ENCODE measurements at regions of chr6 and their contacts with region 1.

Region 1: DNA sequence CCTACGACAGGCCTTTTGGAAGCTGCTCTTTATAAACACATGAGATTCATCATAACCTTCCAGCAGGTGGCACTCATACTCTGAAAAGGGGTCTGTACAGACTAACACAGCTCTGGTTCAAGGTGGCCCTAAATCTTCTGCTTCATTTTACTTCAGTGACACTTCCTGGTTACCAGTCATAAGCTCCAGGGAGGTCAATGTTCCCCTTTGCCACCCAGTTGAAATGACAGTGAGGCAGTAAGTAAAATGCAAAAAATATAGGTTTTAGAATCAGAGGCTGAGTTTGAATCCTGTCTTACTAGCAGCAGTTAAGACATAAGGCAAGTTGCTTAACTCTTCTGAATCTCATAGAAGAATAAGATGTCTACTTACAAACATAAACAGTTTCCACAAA is 132.8 kb downstream of the CDK19 start:
- DNase-seq: peak; percentile 56
- H3K4me3 ChIP-seq: peak overlapping the region in 1 of 2 experiments; percentile 34; a peak in 2 of 4 replicates
- H3K27ac ChIP-seq: peak overlapping the region in 1 of 2 experiments; percentile 92; a peak in 2 of 4 replicates
- H3K4me1 ChIP-seq: peaks cover 5% of the 10 kb centered on the region in 2 experiments; a peak in 3 of 4 replicates
- H3K27me3 ChIP-seq: no peaks in the 10 kb centered on the region
- CTCF ChIP-seq: peak; percentile 84
- EP300 ChIP-seq: no peak
- RAD21 ChIP-seq: peak; percentile 88

Region 2: DNA sequence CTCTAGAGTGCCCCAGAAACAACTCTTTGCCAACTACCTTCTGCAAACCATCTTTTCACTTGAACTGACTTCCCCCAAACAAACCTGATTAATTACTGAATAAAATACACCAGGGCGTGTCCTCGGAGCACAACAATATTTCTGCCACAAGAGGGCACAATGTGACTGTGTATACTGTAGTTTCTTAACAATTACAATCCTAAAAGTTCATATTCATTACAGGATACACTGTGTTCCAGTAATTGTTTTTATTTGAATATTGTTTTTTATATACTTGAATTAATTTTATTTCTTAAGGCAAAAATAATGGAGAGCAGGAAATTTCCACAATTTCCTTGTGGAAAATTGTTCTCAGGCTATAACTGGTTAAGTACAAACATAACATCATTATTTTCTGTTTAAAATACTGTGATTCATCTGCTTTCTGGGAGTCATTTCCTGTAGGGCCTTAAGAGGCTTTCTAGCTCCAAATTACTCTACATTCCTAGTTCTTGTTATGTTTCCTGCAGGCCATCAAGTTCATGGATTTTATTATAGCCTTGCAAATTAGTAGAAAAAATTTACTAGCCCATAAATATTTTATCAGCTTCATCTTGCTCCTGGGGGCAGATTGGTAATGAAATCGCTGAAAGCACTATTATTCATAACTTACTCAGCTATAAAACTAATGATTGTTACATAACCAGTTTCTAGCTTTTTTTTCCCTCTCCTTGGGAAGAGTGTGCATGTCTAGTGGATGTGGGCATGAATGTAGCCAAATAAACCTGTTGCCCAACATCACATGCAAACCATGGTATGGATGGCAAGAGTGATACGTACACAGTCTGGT is 154.1 kb before region 1 on chr6:
- CTCF ChIA-PET with region 1: interaction called, 11 read pairs
- POLR2A ChIA-PET with region 1: no interaction called
- DNase-seq: peak; percentile 59
- H3K4me3 ChIP-seq: peak overlapping the region in 1 of 2 experiments; percentile 42; a peak in 1 of 4 replicates
- H3K27ac ChIP-seq: peak overlapping the region; percentile 47 to 91; a peak in 3 of 4 replicates
- H3K4me1 ChIP-seq: peaks cover 0 to 18% of the 10 kb centered on the region in 2 experiments; a peak in 2 of 4 replicates
- H3K27me3 ChIP-seq: no peaks in the 10 kb centered on the region
- CTCF ChIP-seq: peak; percentile 93
- EP300 ChIP-seq: peak; percentile 8 to 90; a peak in 3 of 4 replicates
- RAD21 ChIP-seq: peak; percentile 93

Region 3: GRCh38 chr6:110699780-110700179 is 17.3 kb after region 1 on chr6:
- CTCF ChIA-PET with region 1: interaction called, 10 read pairs
- POLR2A ChIA-PET with region 1: no interaction called
- DNase-seq: no peak
- H3K4me3 ChIP-seq: no peak overlapping the region
- H3K27ac ChIP-seq: peak overlapping the region in 1 of 2 experiments; percentile 86; a peak in 2 of 4 replicates
- H3K4me1 ChIP-seq: no peaks in the 10 kb centered on the region; a peak in 1 of 4 replicates
- H3K27me3 ChIP-seq: no peaks in the 10 kb centered on the region
- CTCF ChIP-seq: no peak
- EP300 ChIP-seq: no peak
- RAD21 ChIP-seq: no peak

Region 4: GRCh38 chr6:110944681-110945151 is 262.3 kb after region 1 on chr6:
- CTCF ChIA-PET with region 1: interaction called, 55 read pairs
- POLR2A ChIA-PET with region 1: no interaction called
- DNase-seq: no peak
- H3K4me3 ChIP-seq: no peak overlapping the region
- H3K27ac ChIP-seq: peak overlapping the region in 1 of 2 experiments; percentile 91; a peak in 2 of 4 replicates
- H3K4me1 ChIP-seq: 0 out of 4 replicates have a peak, but pooled peaks cover 0 to 3% of the 10 kb centered on the region in 2 experiments
- H3K27me3 ChIP-seq: no peaks in the 10 kb centered on the region
- CTCF ChIP-seq: no peak
- EP300 ChIP-seq: no peak
- RAD21 ChIP-seq: no peak

Region 5: DNA sequence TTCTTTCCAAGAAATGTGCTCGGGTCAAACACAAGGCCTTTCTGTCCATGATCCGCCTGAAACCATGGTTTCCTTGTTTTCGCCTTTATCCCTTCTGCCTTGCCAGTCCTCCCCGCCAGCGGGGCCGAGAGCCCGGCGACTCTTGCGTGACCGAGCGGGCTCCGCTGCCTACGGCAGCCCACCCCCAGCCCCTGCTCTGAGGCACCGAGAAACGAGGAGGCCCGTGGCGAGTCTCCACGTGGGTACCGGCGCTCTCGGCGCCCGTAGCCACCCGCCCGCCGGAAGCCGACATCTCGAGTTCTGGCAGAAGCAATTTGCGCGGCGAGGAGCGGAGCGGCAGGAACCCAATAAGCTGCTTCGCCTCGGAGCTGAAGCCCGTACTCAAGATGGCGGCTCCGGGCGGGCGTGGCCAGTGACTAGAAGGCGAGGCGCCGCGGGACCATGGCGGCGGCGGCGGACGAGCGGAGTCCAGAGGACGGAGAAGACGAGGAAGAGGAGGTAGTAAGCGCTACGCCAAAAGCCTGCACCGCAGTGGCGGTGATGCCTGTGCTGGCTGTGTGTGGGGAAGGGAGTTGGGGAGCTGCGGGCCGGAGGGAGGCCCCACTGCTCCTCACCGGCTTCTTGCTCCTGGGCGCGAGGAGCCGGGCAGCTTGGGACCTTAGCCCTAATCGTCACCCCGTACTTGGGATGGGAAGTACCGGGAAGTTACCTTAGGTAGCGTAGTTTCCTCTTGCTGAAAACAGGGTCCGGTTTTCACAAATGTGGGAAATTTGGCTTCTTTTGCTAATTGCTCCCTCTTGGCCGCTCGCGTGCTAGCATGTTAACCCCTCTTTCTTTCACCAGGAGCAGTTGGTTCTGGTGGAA is 276.1 kb after region 1 on chr6 and contains the start of gene GTF3C6:
- CTCF ChIA-PET with region 1: interaction called, 13 read pairs
- POLR2A ChIA-PET with region 1: interaction called, 3 read pairs
- DNase-seq: peak; percentile 91
- H3K4me3 ChIP-seq: peak within 1 kb of the TSS; percentile 63 to 74
- H3K27ac ChIP-seq: peak within 1 kb of the TSS; percentile 88 to 90
- H3K4me1 ChIP-seq: peaks cover 0 to 6% of the 10 kb centered on the region in 2 experiments; a peak in 1 of 4 replicates
- H3K27me3 ChIP-seq: no peaks in the 10 kb centered on the region
- CTCF ChIP-seq: no peak
- EP300 ChIP-seq: 0 out of 4 replicates have a peak, but pooled peaks of 1 of the 2 experiments have one; percentile 24
- RAD21 ChIP-seq: no peak
- polyA plus RNA-seq, gene GTF3C6: 28.4 and 38.5 TPM in 2 replicates

Measured in SK-N-SH (cell line).